Posterior cingulate gyrus (tissue), 11 donors: ENCODE measurements at regions of chr1 and their contacts with region 1.

Region 1: GRCh38 chr1:234309598-234310459 is 63.4 kb upstream of the COA6 start:
- DNase-seq: peak in 7 of 10 donors; percentile 49 to 91 (median 60)

Region 2: DNA sequence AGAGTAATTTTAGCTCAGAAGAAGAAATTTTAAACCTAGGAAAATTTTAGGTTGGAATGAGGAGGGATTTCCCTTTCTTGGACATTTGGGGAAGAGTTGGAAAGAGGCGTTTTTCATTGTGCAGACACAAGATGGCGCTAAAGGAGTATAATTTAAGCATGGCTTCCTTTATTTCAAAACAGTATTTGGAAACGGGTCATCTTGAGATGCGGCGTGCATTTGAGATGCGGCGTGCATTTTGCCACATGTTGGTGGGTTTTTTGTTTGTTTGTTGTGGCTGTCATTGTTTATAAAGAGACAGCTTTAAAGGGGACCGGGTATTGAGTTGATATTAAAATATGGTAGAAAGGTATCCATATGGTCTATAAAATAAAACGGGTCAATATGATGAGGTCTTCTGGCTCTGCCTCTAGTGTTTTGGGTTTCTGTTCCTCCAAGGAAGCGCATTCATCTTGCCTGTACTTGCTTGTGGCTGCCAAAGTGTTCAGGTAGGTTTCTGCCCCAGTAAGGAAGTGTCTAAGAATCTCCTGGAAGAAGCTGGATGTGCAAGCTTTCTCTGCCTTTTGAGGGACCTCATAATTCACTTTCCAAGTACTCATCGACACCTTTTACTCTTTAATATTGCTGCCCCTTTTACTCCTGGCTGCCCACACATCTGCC is 195.1 kb before region 1 on chr1:
- intact Hi-C with region 1: loop called (anchors 5 kb)
- DNase-seq: peak in 4 of 10 donors; percentile 16 to 33 (median 26)

Region 3: GRCh38 chr1:234154320-234155251 is 155.2 kb before region 1 on chr1:
- intact Hi-C with region 1: loop called (anchors 1 kb)
- DNase-seq: no peak

Region 4: DNA sequence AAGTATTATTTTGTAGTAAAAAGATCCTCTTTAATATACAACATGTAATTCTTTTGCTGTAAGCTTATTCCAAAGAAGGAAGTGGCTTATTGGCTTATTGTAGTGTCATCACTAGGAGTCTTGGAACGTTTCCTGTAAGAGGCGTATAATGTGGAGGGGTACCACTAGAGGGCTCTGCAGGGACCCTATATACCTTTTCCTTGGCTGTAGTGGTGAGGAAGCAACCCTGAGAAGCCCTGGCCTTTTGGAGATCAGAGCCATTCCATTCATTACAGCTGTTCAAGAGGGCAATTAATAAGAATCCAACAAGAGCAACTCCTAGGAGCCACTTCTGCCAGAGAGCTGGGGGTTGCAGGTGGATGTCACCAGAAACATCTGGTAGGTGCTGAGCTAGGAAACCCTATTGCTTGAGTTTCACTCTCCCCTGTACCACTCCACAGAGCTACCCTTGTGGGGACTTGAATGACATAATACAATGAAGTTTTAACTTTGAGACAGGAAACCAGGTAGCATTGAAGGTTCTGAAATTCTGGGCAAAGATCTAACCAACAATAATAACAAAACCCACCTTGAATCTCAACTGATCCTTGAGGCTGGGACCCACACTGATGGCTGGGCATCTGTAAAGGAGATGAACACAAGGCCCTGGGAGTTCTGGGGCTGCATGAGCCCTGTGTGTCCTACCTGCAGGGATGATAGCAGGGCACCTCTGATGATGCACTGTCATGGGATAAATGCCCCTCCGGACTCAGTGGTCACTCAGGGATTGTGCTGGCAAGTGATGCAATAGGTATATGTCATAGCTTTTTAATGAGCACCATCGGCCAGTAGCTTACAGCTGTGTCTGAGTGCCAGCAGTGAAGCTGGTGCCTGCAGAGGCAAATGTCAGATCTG is 96.8 kb before region 1 on chr1:
- intact Hi-C with region 1: loop called (anchors 5 kb)
- DNase-seq: no peak